K562 (cell line): ENCODE measurements at regions of chr19 and their contacts with region 1.

Region 1: GRCh38 chr19:17938092-17938845 is 5.5 kb downstream of the CCDC124 start:
- DNase-seq: peak; percentile 73 to 87 (median 80)
- ATAC-seq: peak; percentile 81
- H3K4me3 ChIP-seq: no peak overlapping the region
- H3K27ac ChIP-seq: no peak overlapping the region
- H3K4me1 ChIP-seq: peaks cover 19 to 32% of the 10 kb centered on the region in 2 experiments
- H3K27me3 ChIP-seq: no peaks in the 10 kb centered on the region
- CTCF ChIP-seq: peak; percentile 95
- EP300 ChIP-seq: no peak
- POLR2A ChIP-seq: no peak
- RAD21 ChIP-seq: peak; percentile 96 to 97

Region 2: DNA sequence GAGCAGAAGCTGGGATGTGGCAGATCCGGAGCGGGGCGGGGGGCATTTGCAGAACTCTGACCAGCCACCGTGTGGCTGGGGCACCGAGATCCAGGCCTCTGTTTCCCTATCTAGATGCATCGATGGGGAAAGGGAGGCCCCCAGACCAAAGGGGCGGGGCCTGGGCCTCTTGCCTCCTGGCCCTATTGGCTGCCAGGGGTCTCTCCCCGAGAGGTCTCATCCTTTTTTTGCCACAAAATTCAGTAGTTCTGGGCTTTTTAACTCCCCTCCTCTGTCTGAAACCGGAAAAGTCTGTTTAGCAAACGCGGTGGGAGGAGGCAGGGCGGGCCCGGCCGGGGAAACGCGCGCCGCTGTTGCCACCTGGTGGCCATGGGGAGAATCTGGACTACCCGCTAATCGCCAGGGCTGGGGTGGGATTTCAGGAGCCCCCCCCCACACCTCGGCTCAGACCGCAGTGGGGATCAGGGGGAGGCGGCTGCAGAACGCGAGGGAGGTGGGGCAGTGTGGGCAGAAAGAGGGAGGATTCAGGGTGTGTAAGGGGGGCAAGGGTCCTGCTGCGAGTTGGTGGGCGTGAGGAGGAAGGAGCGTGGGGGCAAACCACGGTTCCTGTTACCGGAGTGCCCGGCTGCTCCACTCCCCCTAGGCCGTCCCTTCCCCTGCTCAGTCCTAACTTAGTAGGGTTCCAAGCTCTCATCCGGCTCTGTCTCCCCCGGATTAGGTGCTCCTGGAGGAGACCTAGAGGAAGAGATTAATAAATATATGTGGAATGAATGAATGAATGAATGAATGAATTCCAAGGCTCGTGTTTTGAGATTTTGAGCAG is 120.2 kb after region 1 on chr19:
- CTCF ChIA-PET with region 1: interaction called, 11 read pairs
- POLR2A ChIA-PET with region 1: interaction called, 4 read pairs
- in situ Hi-C with region 1: loop called (anchors 5 kb)
- intact Hi-C with region 1: loop called (anchors 1 kb)
- DNase-seq: peak; percentile 85 to 88 (median 86)
- ATAC-seq: peak; percentile 95
- H3K4me3 ChIP-seq: peak overlapping the region; percentile 22
- H3K27ac ChIP-seq: peak overlapping the region; percentile 67; the same call in 2 of the 3 replicates
- H3K4me1 ChIP-seq: peaks cover 3 to 13% of the 10 kb centered on the region in 2 experiments; a peak in 4 of 5 replicates
- H3K27me3 ChIP-seq: no peaks in the 10 kb centered on the region
- CTCF ChIP-seq: peak; percentile 84 to 92 (median 85)
- EP300 ChIP-seq: no peak
- POLR2A ChIP-seq: no peak
- RAD21 ChIP-seq: peak; percentile 96 to 97